Activated CD4-positive, alpha-beta T cell treated with anti-CD3 and anti-CD28 coated beads, Interleukin-2, amount 10 ng/mL, durations not matched to agents 24 days and 14 days (primary cell): ENCODE measurements at regions of chr2 and their contacts with region 1.

Region 1: GRCh38 chr2:238438856-238439849 is 12.4 kb downstream of the ASB1 start:
- DNase-seq: no peak
- H3K4me3 Mint-ChIP-seq: peak overlapping the region; percentile 25
- H3K27ac Mint-ChIP-seq: peak overlapping the region; percentile 81
- H3K4me1 Mint-ChIP-seq: peaks cover 25% of the 10 kb centered on the region
- H3K27me3 Mint-ChIP-seq: no peaks in the 10 kb centered on the region

Region 2: DNA sequence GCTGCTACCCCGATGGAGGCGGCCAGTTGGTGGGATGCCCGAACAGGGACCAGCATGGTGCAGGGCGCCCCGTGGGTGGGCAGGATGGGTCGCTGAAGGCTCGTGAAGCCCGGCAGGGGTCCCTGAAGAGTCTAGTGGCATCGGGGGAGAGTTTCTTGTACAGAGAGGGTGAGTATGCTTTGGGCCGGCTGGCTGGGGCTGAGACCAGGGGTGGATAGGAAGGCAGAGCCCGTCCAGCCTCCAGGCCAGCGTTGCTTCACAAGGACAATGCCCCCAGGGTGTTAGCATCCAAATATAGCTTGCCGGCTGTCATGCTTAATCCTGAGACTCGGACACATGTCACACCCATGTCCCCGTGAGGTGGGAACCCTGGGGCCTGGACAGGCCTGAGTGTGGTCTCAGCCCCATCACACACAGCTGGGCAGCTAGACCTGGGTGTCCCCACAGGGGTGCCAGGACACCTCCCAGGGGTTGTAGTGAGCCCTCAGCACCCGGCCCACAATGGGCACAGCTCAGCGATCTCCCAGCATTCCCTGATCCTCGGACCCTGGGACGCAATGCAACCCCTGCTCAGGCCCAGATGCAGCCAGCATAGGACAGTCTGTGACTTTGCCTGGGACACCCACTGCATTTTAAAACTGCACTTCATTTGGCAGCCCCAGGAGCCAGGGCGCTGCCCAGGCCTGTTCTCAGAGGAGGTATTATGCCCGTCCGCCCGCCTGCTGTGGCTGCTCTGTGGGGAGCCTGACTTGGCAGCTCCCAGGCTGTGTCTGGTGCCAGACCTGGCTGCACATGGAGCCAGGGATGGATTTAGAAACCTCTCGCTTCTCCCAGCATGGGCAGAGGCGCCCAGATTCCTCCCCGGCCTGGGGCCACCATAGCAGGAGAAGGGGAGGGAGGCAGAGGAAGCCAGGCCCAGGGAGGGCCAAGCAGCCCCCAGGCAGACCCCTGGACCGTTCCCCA is 543.3 kb before region 1 on chr2:
- intact Hi-C with region 1: no loop called
- DNase-seq: no peak
- H3K4me3 Mint-ChIP-seq: no peak overlapping the region
- H3K27ac Mint-ChIP-seq: peak overlapping the region; percentile 11
- H3K4me1 Mint-ChIP-seq: peaks cover 40% of the 10 kb centered on the region
- H3K27me3 Mint-ChIP-seq: no peaks in the 10 kb centered on the region

Region 3: GRCh38 chr2:238426568-238427434 is 12.4 kb before region 1 on chr2 and contains the start of gene ASB1:
- intact Hi-C with region 1: loop called (anchors 1 kb)
- DNase-seq: peak; percentile 95
- H3K4me3 Mint-ChIP-seq: peak within 1 kb of the TSS; percentile 91
- H3K27ac Mint-ChIP-seq: peak within 1 kb of the TSS; percentile 93
- H3K4me1 Mint-ChIP-seq: peaks cover 33% of the 10 kb centered on the region
- H3K27me3 Mint-ChIP-seq: no peaks in the 10 kb centered on the region
- total RNA-seq, gene ASB1: 33.9 and 34.8 TPM in 2 replicates

Region 4: DNA sequence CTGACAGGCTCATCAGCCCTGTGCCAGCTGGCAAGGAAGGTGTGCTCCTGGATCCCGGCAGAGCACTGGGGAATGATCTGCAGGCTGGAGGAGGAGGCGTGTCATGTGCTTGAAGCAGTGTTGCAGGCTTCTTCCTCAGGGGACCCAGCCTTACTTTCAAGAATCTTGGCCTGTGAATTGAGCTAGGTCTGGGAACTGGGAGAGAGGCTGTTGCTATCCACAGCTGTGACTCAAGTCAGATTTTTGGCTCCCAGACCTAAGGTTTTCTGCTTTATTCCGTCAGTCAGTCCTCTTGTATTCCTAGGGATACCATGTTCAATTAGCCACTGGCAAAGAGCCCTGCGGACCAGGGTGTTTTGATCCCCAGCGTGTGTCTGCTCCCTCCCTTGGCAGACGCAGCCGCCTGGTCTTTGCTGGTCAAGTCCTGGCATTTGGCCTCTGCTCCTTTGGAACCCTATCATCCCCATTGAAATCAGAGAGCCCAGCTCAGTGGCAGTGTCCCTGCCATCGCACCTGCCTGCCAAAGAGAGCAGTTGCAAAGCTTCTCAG is 20.0 kb after region 1 on chr2:
- intact Hi-C with region 1: no loop called
- DNase-seq: no peak
- H3K4me3 Mint-ChIP-seq: no peak overlapping the region
- H3K27ac Mint-ChIP-seq: no peak overlapping the region
- H3K4me1 Mint-ChIP-seq: no peaks in the 10 kb centered on the region
- H3K27me3 Mint-ChIP-seq: peaks cover 1% of the 10 kb centered on the region